GM12878 (cell line): ENCODE measurements at regions of chr9 and their contacts with region 1.

Region 1: GRCh38 chr9:23492126-23493002 is 333.7 kb downstream of the ELAVL2 start:
- DNase-seq: no peak
- ATAC-seq: peak; percentile 92
- H3K4me3 ChIP-seq: no peak overlapping the region
- H3K27ac ChIP-seq: no peak overlapping the region
- H3K4me1 ChIP-seq: no peaks in the 10 kb centered on the region
- H3K27me3 ChIP-seq: no peaks in the 10 kb centered on the region
- CTCF ChIP-seq: peak; percentile 27 to 60 (median 59); a peak in 3 of 6 replicates
- EP300 ChIP-seq: no peak
- POLR2A ChIP-seq: no peak
- RAD21 ChIP-seq: peak; percentile 59

Region 2: DNA sequence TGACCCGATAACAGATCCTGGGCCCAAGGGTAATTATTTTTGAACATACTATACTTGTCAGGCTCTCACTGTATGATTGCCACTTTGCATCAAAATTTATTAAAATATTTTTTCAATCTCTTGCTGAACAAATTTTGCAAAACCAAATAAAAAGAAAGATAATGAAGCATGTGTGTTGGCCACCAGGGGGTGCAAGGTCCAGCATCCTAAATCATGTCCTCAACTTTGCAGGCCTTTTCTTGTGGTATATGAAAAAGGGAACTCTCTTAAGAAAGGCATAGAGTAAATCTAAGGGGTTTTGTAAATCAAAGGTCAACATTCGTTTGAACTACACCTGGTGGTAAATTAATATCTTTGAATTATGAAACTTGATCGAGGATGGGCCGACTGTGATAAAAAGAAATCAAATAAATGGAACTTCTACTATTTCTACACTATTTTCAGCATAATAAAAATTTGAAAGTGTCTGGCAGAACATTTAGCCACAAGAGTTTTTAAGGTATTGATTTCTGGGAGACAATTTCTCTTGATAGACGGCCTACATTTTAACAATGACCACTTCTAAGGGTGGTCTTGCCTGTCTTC is 369.2 kb before region 1 on chr9:
- CTCF ChIA-PET with region 1: interaction called, 24 read pairs
- POLR2A ChIA-PET with region 1: no interaction called
- RAD21 ChIA-PET with region 1: interaction called, 3 read pairs
- SMC1A ChIA-PET with region 1: interaction called, 4 read pairs
- in situ Hi-C with region 1: no loop called
- intact Hi-C with region 1: loop called (anchors 1 kb)
- DNase-seq: no peak
- ATAC-seq: peak; percentile 77
- H3K4me3 ChIP-seq: no peak overlapping the region
- H3K27ac ChIP-seq: no peak overlapping the region
- H3K4me1 ChIP-seq: no peaks in the 10 kb centered on the region
- H3K27me3 ChIP-seq: no peaks in the 10 kb centered on the region
- CTCF ChIP-seq: peak; percentile 43 to 49 (median 47)
- EP300 ChIP-seq: no peak
- POLR2A ChIP-seq: no peak
- RAD21 ChIP-seq: peak; percentile 56

Region 3: GRCh38 chr9:23438299-23438907 is 54.0 kb before region 1 on chr9:
- CTCF ChIA-PET with region 1: no interaction called
- POLR2A ChIA-PET with region 1: no interaction called
- RAD21 ChIA-PET with region 1: no interaction called
- SMC1A ChIA-PET with region 1: no interaction called
- in situ Hi-C with region 1: no loop called
- intact Hi-C with region 1: no loop called
- DNase-seq: no peak
- ATAC-seq: no peak
- H3K4me3 ChIP-seq: no peak overlapping the region
- H3K27ac ChIP-seq: no peak overlapping the region
- H3K4me1 ChIP-seq: no peaks in the 10 kb centered on the region
- H3K27me3 ChIP-seq: no peaks in the 10 kb centered on the region
- CTCF ChIP-seq: no peak
- EP300 ChIP-seq: no peak
- POLR2A ChIP-seq: no peak
- RAD21 ChIP-seq: no peak

Region 4: DNA sequence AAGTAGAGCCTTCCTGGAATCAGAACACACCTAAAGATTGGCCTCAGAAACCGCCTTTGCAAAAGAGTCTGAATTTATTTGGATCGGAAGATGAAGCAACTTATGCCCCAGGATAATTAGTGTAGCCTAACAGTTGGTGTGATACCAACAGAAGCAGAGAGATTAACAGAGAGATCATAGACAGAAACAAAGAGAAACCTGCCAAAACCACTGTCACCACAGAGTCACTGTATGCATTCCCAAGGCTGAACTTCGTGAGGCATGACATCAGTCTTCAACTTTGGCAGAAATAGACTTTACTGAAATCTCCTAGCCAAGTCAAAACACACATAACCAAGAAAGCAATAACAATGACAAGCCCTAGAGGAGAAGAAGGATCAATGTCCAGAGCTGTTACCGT is 28.1 kb before region 1 on chr9:
- CTCF ChIA-PET with region 1: no interaction called
- POLR2A ChIA-PET with region 1: no interaction called
- RAD21 ChIA-PET with region 1: no interaction called
- SMC1A ChIA-PET with region 1: no interaction called
- in situ Hi-C with region 1: no loop called
- intact Hi-C with region 1: no loop called
- DNase-seq: no peak
- ATAC-seq: no peak
- H3K4me3 ChIP-seq: no peak overlapping the region
- H3K27ac ChIP-seq: no peak overlapping the region
- H3K4me1 ChIP-seq: no peaks in the 10 kb centered on the region
- H3K27me3 ChIP-seq: no peaks in the 10 kb centered on the region
- CTCF ChIP-seq: no peak
- EP300 ChIP-seq: no peak
- POLR2A ChIP-seq: no peak
- RAD21 ChIP-seq: no peak